ENCODE measurements at regions of chr19 and their contacts with region 1.

Region 1: DNA sequence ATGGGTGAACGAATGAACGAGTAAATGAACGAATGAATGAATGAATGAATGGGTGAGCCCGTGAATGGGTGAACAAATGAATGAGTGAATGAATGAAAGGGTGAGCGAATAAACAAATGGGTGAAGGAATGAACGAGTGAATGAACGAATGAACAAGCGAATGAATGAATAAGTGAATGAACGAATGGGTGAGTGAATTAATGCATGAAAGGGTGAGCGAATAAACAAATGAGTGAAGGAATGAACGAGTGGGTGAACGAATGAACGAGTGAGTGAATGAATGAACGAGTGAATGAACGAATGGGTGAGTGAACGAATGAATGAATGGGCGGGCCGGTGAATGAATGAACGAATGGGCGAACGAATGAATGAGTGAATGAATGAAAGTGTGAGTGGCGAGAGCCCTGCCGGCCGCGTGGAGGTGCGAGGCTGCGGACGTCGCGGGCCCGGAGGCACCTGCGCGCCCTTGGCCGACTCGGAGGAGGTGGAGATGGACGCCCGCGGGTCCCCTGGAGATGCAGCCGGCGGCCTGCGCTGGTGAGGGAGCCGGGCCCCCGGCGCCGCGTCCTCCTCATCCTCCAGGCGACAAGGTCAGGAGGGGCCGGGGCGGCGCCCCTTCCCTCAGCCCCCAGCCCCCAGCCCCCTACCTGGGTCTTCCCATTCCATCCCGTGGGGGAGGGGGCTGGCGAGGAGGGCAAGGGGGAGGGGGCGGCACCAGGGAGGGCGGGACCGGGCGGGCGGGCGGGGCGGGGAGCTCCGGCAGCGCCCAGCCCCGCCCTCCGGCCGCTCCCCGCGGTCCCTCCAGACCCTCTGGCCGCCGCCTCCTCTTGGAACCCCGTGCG is 15.4 kb downstream of the ANKRD24 start:
- DNase-seq: no peak
- ATAC-seq: no peak
- H3K4me3 ChIP-seq: no peak overlapping the region
- H3K27ac ChIP-seq: no peak overlapping the region
- H3K4me1 ChIP-seq: no peaks in the 10 kb centered on the region
- H3K27me3 ChIP-seq: peaks cover 62% of the 10 kb centered on the region
- CTCF ChIP-seq: no peak
- POLR2A ChIP-seq: no peak
- RAD21 ChIP-seq: no peak

Region 2: DNA sequence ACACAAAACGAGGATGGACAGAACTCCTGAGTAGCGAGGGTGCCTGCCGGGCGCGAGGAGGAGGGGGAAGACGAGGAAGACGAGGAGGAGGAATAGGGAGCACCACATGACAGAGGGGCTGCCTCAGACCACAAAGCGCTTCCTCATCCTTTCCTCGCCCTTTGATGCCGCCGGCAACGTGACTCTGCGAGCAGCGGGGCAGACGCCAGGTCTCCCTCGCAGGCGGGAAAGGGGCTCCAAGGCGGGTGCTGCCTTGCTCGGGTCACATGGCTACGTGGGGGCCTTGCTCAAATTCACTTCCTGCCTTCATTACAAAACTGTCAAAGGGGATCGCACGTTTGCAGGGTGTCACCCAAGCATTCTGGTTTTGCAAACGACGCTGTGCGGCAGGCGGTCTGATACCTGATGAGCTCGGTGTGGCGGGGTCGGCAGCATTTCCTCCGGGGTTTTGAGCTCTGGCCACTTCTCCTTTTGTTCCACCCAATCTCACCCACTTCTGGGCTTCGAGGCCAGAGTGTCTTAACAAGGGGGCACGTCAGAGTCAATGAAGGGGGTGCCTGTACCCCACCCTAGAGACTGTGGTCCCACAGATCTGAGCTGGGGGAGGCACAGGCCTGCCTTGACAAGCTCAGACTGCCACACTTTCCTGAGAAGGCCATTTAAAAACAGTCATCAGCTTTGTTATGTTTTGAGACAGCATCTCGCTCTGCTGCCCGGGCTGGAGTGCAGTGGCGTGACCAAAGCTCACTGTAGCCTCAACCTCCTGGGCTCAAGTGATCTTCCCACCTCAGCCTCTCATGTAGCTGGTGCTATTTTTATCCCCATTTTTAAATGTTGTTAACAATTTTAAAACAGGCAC is 88.8 kb before region 1 on chr19:
- CTCF ChIA-PET with region 1: no interaction called
- POLR2A ChIA-PET with region 1: no interaction called
- dilution Hi-C with region 1: no loop called
- in situ Hi-C with region 1: no loop called
- intact Hi-C with region 1: no loop called
- DNase-seq: no peak
- ATAC-seq: no peak
- H3K4me3 ChIP-seq: no peak overlapping the region
- H3K27ac ChIP-seq: no peak overlapping the region
- H3K4me1 ChIP-seq: peaks cover 2% of the 10 kb centered on the region
- H3K27me3 ChIP-seq: no peaks in the 10 kb centered on the region
- CTCF ChIP-seq: no peak
- POLR2A ChIP-seq: no peak
- RAD21 ChIP-seq: no peak

Region 3: GRCh38 chr19:4182084-4182810 is 15.6 kb before region 1 on chr19 and contains the starts of genes ANKRD24 and SIRT6:
- CTCF ChIA-PET with region 1: no interaction called
- POLR2A ChIA-PET with region 1: no interaction called
- dilution Hi-C with region 1: no loop called
- in situ Hi-C with region 1: no loop called
- intact Hi-C with region 1: no loop called
- DNase-seq: peak; percentile 95
- ATAC-seq: peak; percentile 94
- H3K4me3 ChIP-seq: peak within 1 kb of the TSS; percentile 75
- H3K27ac ChIP-seq: peak within 1 kb of the TSS; percentile 84
- H3K4me1 ChIP-seq: 0 out of 2 replicates have a peak, but pooled peaks cover 1% of the 10 kb centered on the region
- H3K27me3 ChIP-seq: no peaks in the 10 kb centered on the region
- CTCF ChIP-seq: no peak
- POLR2A ChIP-seq: peak; percentile 54; the same call in 1 of the 2 replicates
- RAD21 ChIP-seq: no peak
- total RNA-seq, gene ANKRD24: 0.18 and 0.28 TPM in 2 replicates
- total RNA-seq, gene SIRT6: 3.9 and 6.1 TPM in 2 replicates

Region 4: DNA sequence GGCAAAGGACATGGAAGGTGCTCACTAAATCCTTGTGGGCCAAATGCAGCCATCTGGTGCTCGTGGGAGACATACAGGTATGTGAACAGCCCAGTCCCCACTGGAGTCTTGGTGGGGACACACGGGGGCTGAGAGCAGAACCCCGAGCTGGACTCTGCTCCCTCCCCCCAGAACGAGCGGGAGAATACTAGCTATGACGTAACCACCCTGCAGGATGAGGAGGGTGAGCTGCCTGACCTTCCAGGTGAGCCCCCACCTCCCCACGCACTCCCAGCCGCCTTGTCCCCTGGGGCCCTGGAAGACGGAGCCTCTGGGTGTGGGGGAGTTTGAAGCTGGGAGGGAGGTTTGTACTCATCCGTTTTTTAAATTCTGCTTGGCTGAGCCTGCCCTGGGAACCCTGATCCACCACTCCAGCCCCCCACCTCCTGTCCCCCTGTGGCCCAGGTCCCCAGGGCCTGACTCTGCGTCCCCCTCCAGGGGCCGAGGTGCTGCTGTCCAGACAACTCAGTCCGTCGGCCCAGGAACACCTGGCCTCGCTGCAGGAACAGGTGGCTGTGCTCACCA is 18.0 kb after region 1 on chr19:
- CTCF ChIA-PET with region 1: no interaction called
- POLR2A ChIA-PET with region 1: no interaction called
- dilution Hi-C with region 1: no loop called
- in situ Hi-C with region 1: no loop called
- intact Hi-C with region 1: loop called (anchors 1 kb)
- DNase-seq: no peak
- ATAC-seq: no peak
- H3K4me3 ChIP-seq: no peak overlapping the region
- H3K27ac ChIP-seq: no peak overlapping the region
- H3K4me1 ChIP-seq: no peaks in the 10 kb centered on the region
- H3K27me3 ChIP-seq: peaks cover 3% of the 10 kb centered on the region; the same call in 1 of the 2 replicates
- CTCF ChIP-seq: no peak
- POLR2A ChIP-seq: no peak
- RAD21 ChIP-seq: no peak